ENCODE measurements at regions of chr4 and their contacts with region 1.

Region 1: DNA sequence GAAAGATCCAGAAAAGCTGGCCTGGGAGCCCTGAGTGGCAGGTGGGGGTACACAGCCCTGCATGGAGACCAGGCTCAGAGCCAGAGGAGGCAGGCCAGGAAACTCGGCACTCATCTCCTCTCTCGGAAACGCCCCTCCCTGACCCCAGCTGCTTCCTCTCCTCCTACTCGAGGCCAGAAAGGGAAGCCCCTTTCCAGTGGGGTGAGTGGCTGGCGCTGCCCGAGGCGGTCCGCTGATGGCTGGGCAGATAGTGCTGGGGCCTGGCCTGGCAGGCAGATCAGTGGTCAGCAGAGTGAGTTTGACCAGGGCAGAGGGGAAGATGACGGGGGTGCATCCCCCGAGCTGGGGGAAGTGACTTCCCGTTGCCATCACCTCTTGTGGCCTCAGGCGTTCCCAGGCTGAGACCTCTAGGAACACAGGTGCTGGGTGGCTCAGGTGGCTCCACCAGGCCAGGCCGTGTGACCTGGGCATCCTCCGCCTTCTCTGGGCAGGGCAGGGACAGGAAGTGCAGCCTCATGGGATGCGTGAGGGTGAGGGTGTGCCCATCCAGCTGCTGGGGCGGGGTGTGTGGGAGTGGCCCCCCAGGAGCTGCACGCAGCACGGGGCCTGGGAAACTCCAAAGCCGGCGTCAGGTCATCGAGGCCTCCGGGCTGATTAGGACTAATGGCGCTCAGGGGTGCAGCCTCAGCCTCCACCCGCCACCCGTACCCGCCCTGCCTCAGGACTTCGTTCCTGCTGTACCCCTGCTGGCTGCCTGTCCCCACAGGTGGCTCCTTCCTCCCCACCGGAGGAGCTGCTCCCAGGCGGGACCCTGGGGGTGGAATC is 5.7 kb downstream of the SH3BP2 start:
- DNase-seq: peak; percentile 35
- H3K4me3 Mint-ChIP-seq: peak overlapping the region; percentile 79
- H3K27ac Mint-ChIP-seq: peak overlapping the region; percentile 87
- H3K4me1 Mint-ChIP-seq: peaks cover 51% of the 10 kb centered on the region
- H3K27me3 Mint-ChIP-seq: no peaks in the 10 kb centered on the region

Region 2: GRCh38 chr4:2721586-2721985 is 77.0 kb before region 1 on chr4:
- intact Hi-C with region 1: no loop called
- DNase-seq: no peak
- H3K4me3 Mint-ChIP-seq: no peak overlapping the region
- H3K27ac Mint-ChIP-seq: no peak overlapping the region
- H3K4me1 Mint-ChIP-seq: peaks cover 3% of the 10 kb centered on the region
- H3K27me3 Mint-ChIP-seq: no peaks in the 10 kb centered on the region

Region 3: DNA sequence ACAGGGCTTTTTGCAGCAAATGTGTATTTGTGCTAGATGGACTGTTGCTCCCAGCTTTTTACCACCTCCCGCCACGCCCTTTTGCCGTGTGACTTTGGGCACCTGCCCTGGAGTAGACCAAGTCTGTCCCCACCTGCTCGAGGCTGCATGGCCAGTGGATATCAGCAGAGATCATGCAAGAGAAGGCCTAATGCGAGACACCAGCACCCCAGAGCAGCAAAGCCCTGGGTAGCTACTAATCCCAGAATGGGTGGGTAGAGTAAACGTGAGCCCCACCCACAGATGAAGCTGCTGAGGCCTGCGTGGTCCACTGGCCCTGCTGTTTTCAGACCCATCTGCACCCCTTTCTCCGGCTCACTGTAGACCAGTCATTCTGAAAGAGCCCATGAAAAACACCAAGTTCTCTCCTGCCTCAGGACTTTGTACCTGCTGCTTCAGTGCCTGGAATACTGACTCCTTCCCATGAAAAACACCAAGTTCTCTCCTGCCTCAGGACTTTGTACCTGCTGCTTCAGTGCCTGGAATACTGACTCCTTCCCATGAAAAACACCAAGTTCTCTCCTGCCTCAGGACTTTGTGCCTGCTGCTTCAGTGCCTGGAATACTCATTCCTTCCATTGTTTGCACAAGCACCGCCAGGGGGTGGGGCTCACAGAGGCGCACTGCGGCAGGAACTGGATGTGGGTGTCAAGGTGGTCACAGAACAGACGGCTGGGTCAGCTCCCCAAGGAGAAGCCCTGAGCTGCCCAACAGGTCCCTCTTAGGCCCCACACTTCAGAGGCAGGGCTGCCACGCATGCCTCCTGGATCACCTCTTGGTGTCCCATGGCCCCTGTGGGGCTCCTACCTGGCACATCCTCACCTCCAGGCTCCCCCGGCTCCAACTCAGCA is 37.3 kb before region 1 on chr4:
- intact Hi-C with region 1: loop called (anchors 2 kb)
- DNase-seq: no peak
- H3K4me3 Mint-ChIP-seq: no peak overlapping the region
- H3K27ac Mint-ChIP-seq: no peak overlapping the region
- H3K4me1 Mint-ChIP-seq: peaks cover 12% of the 10 kb centered on the region
- H3K27me3 Mint-ChIP-seq: no peaks in the 10 kb centered on the region

Region 4: GRCh38 chr4:3791978-3792542 is 993.4 kb after region 1 on chr4:
- intact Hi-C with region 1: no loop called
- DNase-seq: no peak
- H3K4me3 Mint-ChIP-seq: no peak overlapping the region
- H3K27ac Mint-ChIP-seq: no peak overlapping the region
- H3K4me1 Mint-ChIP-seq: no peaks in the 10 kb centered on the region
- H3K27me3 Mint-ChIP-seq: no peaks in the 10 kb centered on the region